ENCODE measurements at regions of chr15 and their contacts with region 1.

Region 1: DNA sequence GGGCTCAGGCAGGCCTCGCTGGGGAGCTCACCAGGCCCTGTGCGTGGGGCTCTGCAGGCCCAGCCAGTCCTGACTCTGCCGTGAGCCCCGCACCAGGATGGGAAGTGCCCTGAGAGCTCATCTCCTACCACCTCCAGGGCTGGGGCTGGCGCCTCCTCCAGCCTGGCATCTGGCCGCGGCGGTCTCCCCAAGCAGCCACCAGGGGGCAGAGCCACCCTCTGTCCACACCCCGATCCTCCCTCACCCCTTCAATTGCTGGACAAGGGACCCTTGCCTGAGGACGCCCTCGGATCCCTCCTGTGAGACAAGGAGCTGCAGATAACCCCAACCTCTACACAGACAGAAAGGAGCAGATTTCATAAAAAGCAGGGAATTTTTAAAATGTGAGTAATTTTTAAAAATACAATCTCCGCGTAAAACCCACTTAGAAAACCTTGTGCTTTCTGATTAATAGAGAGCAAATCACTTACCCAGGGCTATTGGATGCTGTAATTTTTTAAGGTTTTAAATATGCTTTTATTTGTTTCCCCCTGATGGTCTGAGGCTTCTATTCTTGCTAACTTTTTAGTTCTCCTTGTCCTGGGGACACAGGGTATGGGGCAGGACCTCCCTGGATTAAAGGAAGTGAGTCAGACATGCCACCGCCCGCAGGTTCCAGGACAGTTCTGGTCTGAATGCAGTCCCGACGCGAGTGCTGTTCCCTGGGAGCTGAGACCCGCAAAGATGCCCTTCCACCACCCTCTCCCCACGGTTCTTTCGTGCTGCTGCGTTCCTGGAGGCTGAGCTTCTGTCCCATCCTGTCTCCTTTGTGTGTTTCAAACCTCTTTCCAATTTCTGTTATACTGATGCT is 52.3 kb upstream of the CHRNA7 start:
- DNase-seq: peak; percentile 62 to 69
- ATAC-seq: peak; percentile 82 to 91
- H3K4me3 ChIP-seq: no peak overlapping the region
- H3K27ac ChIP-seq: no peak overlapping the region
- H3K4me1 ChIP-seq: peaks cover 16% of the 10 kb centered on the region; the same call in 2 of the 3 replicates
- CTCF ChIP-seq: peak; percentile 85
- EP300 ChIP-seq: no peak
- POLR2A ChIP-seq: no peak
- RAD21 ChIP-seq: peak; percentile 78 to 85

Region 2: DNA sequence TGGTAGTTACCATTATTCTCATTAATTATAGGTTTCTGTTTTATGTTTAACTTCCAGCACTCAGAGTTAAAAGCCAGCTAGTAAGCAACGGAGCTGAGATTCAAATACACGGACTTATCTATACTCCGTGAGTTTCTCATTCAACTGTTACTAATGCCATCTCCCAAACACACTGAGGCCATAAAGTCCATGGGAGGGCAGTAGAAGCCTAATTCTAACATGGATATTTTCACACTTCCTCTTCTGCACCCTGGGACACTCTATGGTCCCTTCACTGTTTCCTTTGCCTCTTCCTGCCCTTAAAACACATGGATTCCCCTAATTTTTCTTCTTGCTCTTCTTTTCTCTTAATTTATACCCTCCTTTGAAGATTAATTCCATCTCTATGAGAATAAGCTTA is 406.4 kb before region 1 on chr15:
- CTCF ChIA-PET with region 1: interaction called, 42 read pairs
- POLR2A ChIA-PET with region 1: no interaction called
- DNase-seq: peak in 1 of 2 experiments; percentile 18
- ATAC-seq: peak; percentile 68 to 87
- H3K4me3 ChIP-seq: no peak overlapping the region
- H3K27ac ChIP-seq: no peak overlapping the region
- H3K4me1 ChIP-seq: no peaks in the 10 kb centered on the region
- CTCF ChIP-seq: peak; percentile 43; the same call in 2 of the 3 replicates
- EP300 ChIP-seq: no peak
- POLR2A ChIP-seq: no peak
- RAD21 ChIP-seq: peak; percentile 50; a peak in 4 of 5 replicates

Region 3: DNA sequence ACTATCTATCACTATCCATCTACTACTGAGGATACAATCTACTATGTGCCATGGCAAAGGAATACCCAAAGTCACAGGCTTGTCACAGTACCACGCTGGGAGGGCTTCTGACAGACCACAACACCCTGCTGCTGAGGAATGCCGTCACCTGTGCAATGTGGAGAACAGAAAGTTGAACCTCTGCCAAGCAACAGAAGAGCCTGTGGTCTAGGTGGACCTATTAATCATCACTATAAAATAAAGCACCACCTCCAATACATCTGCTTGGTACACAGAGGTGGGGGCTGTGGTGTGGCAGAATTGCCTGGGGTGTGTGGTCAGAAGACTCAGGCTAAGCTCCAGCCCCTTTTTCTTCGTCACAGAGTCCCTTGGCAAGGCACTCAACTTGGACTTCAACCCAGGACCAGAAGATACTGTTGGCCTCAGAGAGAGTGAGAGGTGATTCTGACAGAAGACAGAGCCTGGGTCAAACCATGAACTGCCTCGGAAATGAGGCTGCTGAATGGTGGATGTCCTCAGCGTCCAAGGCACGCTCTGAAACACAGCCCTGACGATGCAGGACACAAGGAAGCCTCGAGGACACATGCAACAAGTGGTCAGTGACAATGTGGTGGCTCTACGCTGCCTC is 137.1 kb before region 1 on chr15:
- CTCF ChIA-PET with region 1: no interaction called
- POLR2A ChIA-PET with region 1: no interaction called
- DNase-seq: no peak
- ATAC-seq: no peak
- H3K4me3 ChIP-seq: no peak overlapping the region
- H3K27ac ChIP-seq: no peak overlapping the region
- H3K4me1 ChIP-seq: no peaks in the 10 kb centered on the region
- CTCF ChIP-seq: no peak
- EP300 ChIP-seq: no peak
- POLR2A ChIP-seq: no peak
- RAD21 ChIP-seq: no peak

Region 4: DNA sequence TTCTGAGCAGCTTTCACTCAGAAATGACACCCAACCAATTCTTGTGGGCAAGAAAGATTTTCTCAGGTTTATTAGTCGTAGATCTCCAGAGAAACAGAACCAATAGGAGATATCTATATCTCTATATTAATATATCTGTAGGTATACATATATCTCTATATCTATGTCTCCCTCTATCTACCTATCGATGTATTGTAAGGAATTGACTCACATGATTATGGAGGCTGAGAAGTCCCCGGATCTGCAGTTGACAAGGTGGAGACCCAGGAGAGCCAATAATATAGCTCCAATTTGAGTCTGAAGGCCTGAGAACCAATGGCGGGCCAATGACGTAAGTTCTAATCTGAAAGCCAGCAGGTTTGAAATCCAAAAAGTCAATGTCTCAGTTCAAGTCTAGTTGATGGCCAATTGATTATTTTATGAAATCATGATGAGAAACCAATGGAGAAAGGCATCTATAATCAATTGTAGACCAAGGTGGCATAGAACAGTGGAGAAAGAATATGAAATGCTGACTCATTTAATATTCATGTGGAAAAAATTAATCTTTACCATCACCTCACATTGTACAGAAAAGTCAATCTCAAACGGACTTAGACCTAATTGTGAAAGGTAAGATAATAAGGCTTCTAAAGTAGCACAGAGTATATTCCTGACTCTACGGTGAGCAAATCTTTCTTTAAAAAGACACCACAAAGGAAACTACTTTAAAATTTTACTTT is 13.3 kb before region 1 on chr15:
- CTCF ChIA-PET with region 1: interaction called, 67 read pairs
- POLR2A ChIA-PET with region 1: no interaction called
- DNase-seq: no peak
- ATAC-seq: no peak
- H3K4me3 ChIP-seq: no peak overlapping the region
- H3K27ac ChIP-seq: no peak overlapping the region
- H3K4me1 ChIP-seq: no peaks in the 10 kb centered on the region
- CTCF ChIP-seq: peak; percentile 13; the same call in 1 of the 3 replicates
- EP300 ChIP-seq: no peak
- POLR2A ChIP-seq: no peak
- RAD21 ChIP-seq: no peak

Region 5: GRCh38 chr15:32004249-32004648 is 26.2 kb after region 1 on chr15:
- CTCF ChIA-PET with region 1: interaction called, 17 read pairs
- POLR2A ChIA-PET with region 1: no interaction called
- DNase-seq: no peak
- ATAC-seq: no peak
- H3K4me3 ChIP-seq: no peak overlapping the region
- H3K27ac ChIP-seq: no peak overlapping the region
- H3K4me1 ChIP-seq: no peaks in the 10 kb centered on the region
- CTCF ChIP-seq: no peak
- EP300 ChIP-seq: no peak
- POLR2A ChIP-seq: no peak
- RAD21 ChIP-seq: no peak

Region 6: DNA sequence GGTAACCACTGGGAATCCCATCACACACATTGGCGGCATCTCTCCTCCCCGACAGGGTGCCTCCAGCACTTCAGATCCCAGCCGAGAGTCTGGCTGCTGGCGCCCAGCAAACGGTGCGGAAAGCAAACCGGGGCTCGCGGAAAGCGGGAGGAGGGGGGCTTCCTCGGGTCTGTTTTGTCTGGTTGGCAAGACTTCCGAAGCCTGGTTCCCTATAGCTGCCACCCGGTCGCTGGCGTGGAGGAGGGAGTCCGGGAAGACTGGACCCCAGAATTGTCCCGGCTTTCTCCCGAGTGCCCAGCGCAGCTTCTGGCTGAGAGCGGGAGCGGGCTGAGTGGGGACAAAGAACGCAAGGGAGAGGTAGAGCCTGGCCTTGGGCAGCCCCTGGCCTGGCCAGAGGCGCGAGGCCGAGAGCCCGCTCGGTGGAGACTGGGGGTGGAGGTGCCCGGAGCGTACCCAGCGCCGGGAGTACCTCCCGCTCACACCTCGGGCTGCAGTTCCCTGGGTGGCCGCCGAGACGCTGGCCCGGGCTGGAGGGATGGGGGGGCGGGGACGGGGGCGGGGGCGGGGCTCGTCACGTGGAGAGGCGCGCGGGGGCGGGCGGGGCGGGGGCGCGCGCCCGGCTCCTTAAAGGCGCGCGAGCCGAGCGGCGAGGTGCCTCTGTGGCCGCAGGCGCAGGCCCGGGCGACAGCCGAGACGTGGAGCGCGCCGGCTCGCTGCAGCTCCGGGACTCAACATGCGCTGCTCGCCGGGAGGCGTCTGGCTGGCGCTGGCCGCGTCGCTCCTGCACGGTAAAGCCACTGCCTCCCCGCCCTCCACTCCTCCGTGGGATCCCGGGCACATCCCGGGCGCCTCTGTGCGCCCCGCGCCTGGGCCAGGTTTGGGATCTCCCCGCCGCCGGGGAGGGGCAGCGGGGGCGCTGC is 52.1 kb after region 1 on chr15 and contains the start of gene CHRNA7:
- CTCF ChIA-PET with region 1: interaction called, 32 read pairs
- POLR2A ChIA-PET with region 1: no interaction called
- DNase-seq: peak; percentile 63 to 64
- ATAC-seq: peak; percentile 96 to 97
- H3K4me3 ChIP-seq: peak within 1 kb of the TSS; percentile 85
- H3K27ac ChIP-seq: peak within 1 kb of the TSS; percentile 75 to 86
- H3K4me1 ChIP-seq: peaks cover 9% of the 10 kb centered on the region; the same call in 1 of the 3 replicates
- CTCF ChIP-seq: no peak
- EP300 ChIP-seq: no peak
- POLR2A ChIP-seq: peak; percentile 88
- RAD21 ChIP-seq: no peak
- polyA plus RNA-seq, gene CHRNA7: 1.4 and 1.8 TPM in 2 replicates

Region 7: DNA sequence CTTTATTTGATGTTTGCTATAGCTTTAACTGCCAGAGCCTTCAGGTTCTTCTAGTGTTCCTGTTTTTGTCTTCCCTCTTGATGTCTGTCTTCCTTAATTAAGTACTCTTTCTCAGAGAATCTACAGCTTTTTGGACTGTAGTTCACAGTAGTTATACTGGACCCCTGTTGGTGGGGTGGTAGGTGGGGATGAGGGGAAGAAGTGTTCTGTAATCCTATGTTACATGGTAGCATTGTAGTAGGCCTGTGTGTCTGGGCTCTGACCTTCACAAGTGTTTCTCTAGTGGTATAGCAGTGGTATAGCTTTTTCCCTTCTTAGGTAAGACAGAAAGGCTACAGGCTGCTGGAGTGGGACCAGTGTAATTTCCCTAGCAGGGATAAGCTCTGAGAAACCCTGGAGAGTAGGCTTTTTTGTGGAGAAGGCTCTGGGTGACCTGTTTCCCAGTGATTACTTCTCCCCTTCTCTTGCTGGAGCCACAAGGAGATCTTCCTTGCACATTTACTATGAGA is 111.9 kb after region 1 on chr15:
- CTCF ChIA-PET with region 1: no interaction called
- POLR2A ChIA-PET with region 1: no interaction called
- DNase-seq: no peak
- ATAC-seq: no peak
- H3K4me3 ChIP-seq: no peak overlapping the region
- H3K27ac ChIP-seq: no peak overlapping the region
- H3K4me1 ChIP-seq: no peaks in the 10 kb centered on the region
- CTCF ChIP-seq: no peak
- EP300 ChIP-seq: no peak
- POLR2A ChIP-seq: no peak
- RAD21 ChIP-seq: no peak

Region 8: DNA sequence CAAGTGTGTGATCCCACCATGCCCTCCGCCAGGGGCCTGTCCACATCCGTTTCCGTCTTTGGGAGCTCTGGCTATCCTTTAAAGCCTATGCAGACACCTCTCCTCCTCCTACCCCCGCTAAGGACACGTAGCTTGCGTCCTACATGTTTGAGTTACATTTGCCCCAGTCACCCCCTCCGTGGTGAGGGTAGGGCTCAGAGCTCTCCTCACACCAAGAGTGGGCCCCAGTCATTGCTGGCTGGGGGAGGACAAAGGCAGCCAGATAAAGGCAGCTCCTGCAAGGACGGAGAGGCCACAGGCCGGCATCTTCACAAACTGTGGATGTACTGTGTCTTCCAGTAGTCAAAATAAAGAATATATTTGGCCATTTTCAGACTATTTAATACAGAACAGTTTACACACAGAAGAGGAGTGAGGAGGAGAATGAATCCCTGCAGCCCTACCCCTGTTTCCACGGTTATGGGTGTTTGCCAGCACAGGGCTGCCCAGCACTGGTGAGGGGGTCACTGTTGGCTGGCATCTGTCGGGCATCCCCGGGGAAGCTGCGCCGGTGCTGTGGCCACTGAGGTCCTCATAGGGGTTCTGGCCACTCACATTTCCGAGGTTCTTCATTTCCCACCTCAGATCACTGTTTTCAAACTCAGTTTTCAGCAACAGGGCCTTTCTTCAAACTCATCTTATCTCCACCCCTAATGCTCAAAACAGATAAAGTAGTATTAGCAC is 171.0 kb after region 1 on chr15:
- CTCF ChIA-PET with region 1: no interaction called
- POLR2A ChIA-PET with region 1: no interaction called
- DNase-seq: no peak
- ATAC-seq: no peak
- H3K4me3 ChIP-seq: no peak overlapping the region
- H3K27ac ChIP-seq: no peak overlapping the region
- H3K4me1 ChIP-seq: no peaks in the 10 kb centered on the region
- CTCF ChIP-seq: no peak
- EP300 ChIP-seq: no peak
- POLR2A ChIP-seq: no peak
- RAD21 ChIP-seq: no peak

Measured in A549 (cell line).